ENCODE measurements at regions of chr5 and their contacts with region 1.

Region 1: DNA sequence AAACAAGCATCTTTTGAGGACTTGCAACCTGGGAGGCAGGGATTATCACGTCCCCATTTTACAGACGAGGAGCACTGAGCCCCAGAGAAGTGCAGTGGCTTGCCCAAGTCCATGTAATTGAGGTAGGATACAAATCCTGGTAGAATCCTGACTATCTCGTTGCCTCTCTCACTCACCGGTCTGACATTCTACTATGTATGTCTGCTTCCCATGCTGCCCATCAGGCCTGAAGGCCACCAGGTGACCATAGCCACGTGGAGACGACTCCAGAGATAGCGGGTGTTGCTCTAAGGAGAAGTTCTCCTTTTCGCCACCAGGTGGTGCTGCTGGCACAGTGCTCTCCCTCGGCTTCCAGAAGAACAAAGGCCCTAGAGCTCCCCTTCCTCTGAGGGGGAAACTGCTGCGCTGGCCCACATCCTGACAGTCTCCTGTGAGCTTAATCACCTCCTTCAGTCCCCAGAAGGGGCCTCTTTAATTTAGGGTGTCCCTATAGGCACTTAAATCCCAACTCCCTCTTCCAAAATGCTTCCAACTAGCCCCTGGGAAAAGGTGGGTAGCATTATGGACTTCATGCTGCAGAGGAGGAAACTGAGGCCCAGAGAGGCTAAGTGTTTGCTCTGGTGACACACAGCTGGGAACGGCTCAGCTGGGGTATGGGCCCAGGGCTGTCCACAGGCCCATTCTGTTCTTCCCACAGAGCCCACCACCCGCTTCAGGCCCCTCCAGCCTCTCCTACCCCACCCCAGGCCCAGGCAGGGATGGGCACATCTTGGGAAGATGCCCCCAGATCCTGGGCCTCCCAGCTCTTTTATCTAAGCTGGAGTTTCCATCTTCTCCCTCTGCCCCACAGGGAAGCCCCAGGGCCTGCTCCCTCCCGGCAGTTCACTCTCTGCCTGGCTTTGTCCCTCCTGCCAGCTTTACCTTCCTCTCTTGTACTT is 6.4 kb downstream of the SLC34A1 start:
- DNase-seq: peak; percentile 82
- ATAC-seq: peak; percentile 92
- H3K4me3 ChIP-seq: no peak overlapping the region
- H3K27ac ChIP-seq: peak overlapping the region; percentile 42
- H3K4me1 ChIP-seq: peaks cover 9% of the 10 kb centered on the region
- H3K27me3 ChIP-seq: peaks cover 5% of the 10 kb centered on the region
- CTCF ChIP-seq: peak; percentile 99

Region 2: GRCh38 chr5:177134697-177135225 is 255.9 kb before region 1 on chr5:
- intact Hi-C with region 1: no loop called
- DNase-seq: no peak
- ATAC-seq: no peak
- H3K4me3 ChIP-seq: peak overlapping the region; percentile 87
- H3K27ac ChIP-seq: peak overlapping the region; percentile 90
- H3K4me1 ChIP-seq: peaks cover 38% of the 10 kb centered on the region
- H3K27me3 ChIP-seq: no peaks in the 10 kb centered on the region
- CTCF ChIP-seq: no peak

Region 3: DNA sequence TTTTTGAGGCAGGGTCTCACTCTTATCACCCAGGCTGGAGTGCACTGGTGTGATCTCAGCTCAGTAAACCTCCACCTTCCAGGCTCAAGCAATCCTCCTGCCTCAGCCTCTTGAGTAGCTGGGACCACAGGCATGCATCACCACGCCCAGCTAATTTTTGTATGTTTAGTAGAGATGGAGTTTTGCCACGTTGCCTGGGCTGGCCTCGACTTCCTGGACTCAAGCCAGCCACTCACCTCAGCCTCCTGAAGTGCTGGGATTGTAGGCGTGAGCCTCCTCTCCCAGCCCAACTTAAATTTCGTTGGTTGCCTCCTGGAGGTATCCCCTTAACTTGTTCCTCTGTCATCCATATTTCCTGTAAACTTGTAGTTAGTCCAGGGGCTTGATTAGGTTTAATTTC is 134.3 kb before region 1 on chr5:
- intact Hi-C with region 1: no loop called
- DNase-seq: peak; percentile 69
- ATAC-seq: peak; percentile 72
- H3K4me3 ChIP-seq: no peak overlapping the region
- H3K27ac ChIP-seq: no peak overlapping the region
- H3K4me1 ChIP-seq: no peaks in the 10 kb centered on the region
- H3K27me3 ChIP-seq: no peaks in the 10 kb centered on the region
- CTCF ChIP-seq: no peak

Region 4: DNA sequence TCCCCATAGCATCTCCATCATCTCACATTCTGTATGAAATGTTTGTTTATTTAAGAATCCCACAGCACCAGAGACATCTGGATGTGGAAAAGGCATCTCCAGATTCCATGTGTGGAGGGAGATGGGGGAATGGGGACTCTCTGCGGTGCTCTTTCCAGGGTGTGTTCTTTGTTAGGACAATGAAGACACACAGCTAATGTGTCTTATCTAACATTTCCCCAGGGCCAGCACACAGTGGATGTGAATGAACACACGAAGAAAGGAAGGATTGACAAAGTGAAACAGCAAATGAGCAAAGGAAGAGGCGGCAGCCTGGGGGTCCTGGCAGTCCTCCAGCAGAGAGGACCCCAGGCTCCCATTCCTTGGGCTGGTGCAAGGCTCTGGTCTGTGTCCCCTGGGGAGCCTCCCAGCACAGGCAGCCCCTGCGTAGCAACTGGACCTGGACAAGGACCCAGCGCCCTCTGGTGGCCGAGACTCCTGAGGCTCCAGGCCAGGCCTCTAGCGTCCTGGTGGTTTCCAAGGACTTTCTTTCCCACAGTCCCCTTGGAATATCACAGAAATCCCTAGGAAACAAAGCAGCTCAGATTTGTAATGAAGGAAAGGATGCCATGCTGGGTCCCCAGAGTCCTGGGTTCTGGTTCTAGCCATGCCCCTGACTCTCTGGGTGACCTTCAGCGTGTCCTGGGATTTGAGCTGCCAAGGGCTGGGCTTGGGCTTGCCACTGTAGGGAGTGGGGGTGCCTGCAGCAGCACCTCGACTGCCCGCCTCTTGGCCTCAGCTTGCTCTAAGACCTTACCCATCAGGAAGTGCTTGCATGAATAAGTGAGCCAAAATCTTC is 110.3 kb after region 1 on chr5:
- intact Hi-C with region 1: loop called (anchors 5 kb)
- DNase-seq: peak; percentile 95
- ATAC-seq: peak; percentile 57
- H3K4me3 ChIP-seq: no peak overlapping the region
- H3K27ac ChIP-seq: no peak overlapping the region
- H3K4me1 ChIP-seq: peaks cover 22% of the 10 kb centered on the region
- H3K27me3 ChIP-seq: no peaks in the 10 kb centered on the region
- CTCF ChIP-seq: peak; percentile 98